Activated B cell treated with CpG ODN at 0.5 μM for 24 hours (primary cell): ENCODE measurements at regions of chr17 and their contacts with region 1.

Region 1: GRCh38 chr17:39199820-39200069 is 338 bp upstream of the RPL19 start:
- DNase-seq: peak; percentile 65
- ATAC-seq: peak; percentile 65
- H3K4me3 Mint-ChIP-seq: peak overlapping the region; percentile 99
- H3K27ac Mint-ChIP-seq: peak overlapping the region; percentile 100
- H3K4me1 Mint-ChIP-seq: peaks cover 69% of the 10 kb centered on the region
- H3K27me3 Mint-ChIP-seq: no peaks in the 10 kb centered on the region
- CTCF ChIP-seq: no peak

Region 2: GRCh38 chr17:38809828-38810227 is 389.9 kb before region 1 on chr17:
- CTCF ChIA-PET with region 1: no interaction called
- POLR2A ChIA-PET with region 1: interaction called, 10 read pairs
- intact Hi-C with region 1: no loop called
- DNase-seq: no peak
- ATAC-seq: no peak
- H3K4me3 Mint-ChIP-seq: no peak overlapping the region
- H3K27ac Mint-ChIP-seq: no peak overlapping the region
- H3K4me1 Mint-ChIP-seq: peaks cover 3% of the 10 kb centered on the region
- H3K27me3 Mint-ChIP-seq: no peaks in the 10 kb centered on the region
- CTCF ChIP-seq: no peak

Region 3: DNA sequence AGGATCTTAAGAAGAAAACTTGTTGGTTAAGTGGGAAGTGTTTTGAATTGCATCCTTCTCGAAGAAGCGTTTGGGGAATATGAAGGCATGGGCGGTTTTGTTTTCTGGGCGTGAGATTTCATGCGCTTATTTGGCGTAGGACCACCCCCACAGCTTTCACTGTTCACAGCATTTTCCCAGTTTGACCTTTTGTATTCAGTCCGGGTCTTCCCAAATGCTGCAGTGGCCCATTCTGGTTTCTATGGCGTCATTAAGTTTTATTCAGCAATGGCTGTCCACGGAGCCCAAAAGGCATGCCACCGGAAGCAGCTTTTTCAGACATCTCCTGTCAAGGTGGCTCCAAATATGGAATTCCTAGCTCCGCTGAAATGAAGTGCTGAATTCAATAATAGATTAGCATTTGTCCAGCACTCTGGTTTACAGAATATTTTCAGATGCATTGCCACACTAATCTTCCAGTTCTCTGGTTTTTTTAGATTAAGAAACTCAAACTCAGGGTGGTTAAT is 142.0 kb before region 1 on chr17:
- CTCF ChIA-PET with region 1: no interaction called
- POLR2A ChIA-PET with region 1: interaction called, 10 read pairs
- intact Hi-C with region 1: no loop called
- DNase-seq: no peak
- ATAC-seq: no peak
- H3K4me3 Mint-ChIP-seq: peak overlapping the region; percentile 87
- H3K27ac Mint-ChIP-seq: no peak overlapping the region
- H3K4me1 Mint-ChIP-seq: peaks cover 9% of the 10 kb centered on the region
- H3K27me3 Mint-ChIP-seq: peaks cover 6% of the 10 kb centered on the region
- CTCF ChIP-seq: no peak

Region 4: GRCh38 chr17:39126436-39126835 is 73.3 kb before region 1 on chr17:
- CTCF ChIA-PET with region 1: no interaction called
- POLR2A ChIA-PET with region 1: no interaction called
- intact Hi-C with region 1: no loop called
- DNase-seq: no peak
- ATAC-seq: no peak
- H3K4me3 Mint-ChIP-seq: no peak overlapping the region
- H3K27ac Mint-ChIP-seq: no peak overlapping the region
- H3K4me1 Mint-ChIP-seq: no peaks in the 10 kb centered on the region
- H3K27me3 Mint-ChIP-seq: no peaks in the 10 kb centered on the region
- CTCF ChIP-seq: no peak

Region 5: DNA sequence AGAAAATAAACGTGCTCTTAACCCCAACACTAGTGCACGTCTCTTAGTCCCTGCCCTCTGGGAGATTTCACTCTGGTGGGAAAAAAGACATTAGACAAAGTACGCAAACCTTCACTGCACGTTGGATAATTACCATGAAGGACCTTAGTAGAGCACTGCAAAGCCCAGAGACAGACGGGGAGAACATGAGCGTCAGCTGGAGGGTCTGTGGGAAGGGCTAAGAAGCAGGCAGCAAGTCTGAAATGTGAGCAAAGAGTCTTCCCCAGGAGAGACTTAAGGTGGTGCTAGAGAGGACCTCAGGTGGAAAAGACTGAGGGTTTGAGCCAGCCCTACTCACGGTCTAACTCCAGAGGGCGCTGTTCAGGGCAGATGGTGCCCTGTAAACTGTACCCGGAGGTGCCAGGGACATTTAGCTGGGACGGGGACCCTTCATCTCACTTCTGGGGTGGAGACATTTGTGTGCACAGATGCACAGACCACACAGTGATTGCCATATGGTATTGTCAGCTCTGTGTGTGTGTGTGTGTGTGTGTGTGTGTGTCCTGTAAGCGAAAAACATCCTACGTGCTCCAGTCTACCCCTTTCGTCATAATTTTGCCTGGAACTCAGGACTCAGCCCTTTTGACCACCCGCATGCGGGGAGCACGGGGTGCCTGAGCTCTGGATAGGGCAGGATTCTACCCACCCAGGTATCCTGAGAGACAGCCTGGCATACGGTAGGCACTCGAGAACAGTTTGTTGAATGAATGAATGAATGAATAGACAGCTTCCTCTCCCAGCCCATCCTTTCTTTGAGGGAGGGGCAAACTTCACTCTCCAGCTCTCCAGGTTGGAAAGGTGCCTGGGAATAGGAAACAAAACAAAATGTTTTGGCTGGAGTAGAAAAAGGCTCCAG is 36.1 kb after region 1 on chr17:
- CTCF ChIA-PET with region 1: interaction called, 151 read pairs
- POLR2A ChIA-PET with region 1: interaction called, 19 read pairs
- intact Hi-C with region 1: no loop called
- DNase-seq: no peak
- ATAC-seq: peak; percentile 27
- H3K4me3 Mint-ChIP-seq: no peak overlapping the region
- H3K27ac Mint-ChIP-seq: no peak overlapping the region
- H3K4me1 Mint-ChIP-seq: peaks cover 27% of the 10 kb centered on the region
- H3K27me3 Mint-ChIP-seq: peaks cover 15% of the 10 kb centered on the region
- CTCF ChIP-seq: no peak

Region 6: DNA sequence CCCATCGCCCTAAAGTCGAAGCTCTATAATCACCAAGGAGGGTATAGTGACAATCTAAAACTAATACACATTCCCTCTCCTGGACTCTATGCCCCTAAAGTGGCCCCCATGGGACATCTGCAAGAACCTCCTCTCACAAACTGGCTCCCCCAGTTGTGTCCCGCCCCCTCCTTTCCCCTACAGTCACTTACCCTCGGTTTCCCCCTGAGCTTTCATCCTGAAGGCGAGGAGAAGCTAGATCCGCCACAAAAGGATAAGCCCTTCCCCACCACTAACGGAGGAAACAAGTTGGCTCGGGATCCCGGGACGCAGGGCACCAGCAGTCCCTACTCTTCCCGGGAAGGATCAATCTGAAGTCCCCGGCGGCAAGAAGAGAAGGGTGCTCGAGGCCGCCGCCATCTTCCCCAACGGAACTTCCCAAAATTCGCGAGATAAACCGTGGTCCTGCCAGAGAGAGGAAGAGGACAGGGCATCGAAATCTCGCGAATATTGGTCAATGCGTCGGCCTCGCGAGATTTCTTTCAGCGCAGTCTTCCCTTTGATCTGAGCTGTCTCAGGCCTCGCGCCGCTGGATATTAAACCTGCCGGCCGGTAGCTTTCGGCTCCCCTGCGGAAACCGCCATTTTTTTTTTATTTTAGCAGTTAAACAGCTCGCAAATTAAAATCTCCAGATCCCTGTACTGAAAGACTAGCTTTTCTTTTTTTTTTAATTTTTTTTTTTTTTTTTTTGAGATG is 251.3 kb after region 1 on chr17 and contains the start of gene MED1:
- CTCF ChIA-PET with region 1: no interaction called
- POLR2A ChIA-PET with region 1: interaction called, 18 read pairs
- intact Hi-C with region 1: no loop called
- DNase-seq: peak; percentile 76
- ATAC-seq: peak; percentile 97
- H3K4me3 Mint-ChIP-seq: peak within 1 kb of the TSS; percentile 98
- H3K27ac Mint-ChIP-seq: peak within 1 kb of the TSS; percentile 96
- H3K4me1 Mint-ChIP-seq: peaks cover 28% of the 10 kb centered on the region
- H3K27me3 Mint-ChIP-seq: no peaks in the 10 kb centered on the region
- CTCF ChIP-seq: no peak
- total RNA-seq, gene MED1: 59.2 and 64.3 TPM in 2 replicates